Activated T-helper 1 cell treated with anti-CD3 and anti-CD28 coated beads, Interleukin-12 subunit alpha, Interleukin-12 subunit beta, Interleukin-2, Interleukin-4 antibody, amounts not matched to agents 30 ng/mL and 10 ng/mL and 1 ng/mL, durations not matched to agents 14 hours and 24 hours and 36 hours (primary cell): ENCODE measurements at regions of chr19 and their contacts with region 1.

Region 1: GRCh38 chr19:49468746-49469447 is 5.1 kb upstream of the FLT3LG start:
- DNase-seq: peak; percentile 92
- H3K4me3 Mint-ChIP-seq: peak overlapping the region; percentile 82
- H3K27ac Mint-ChIP-seq: peak overlapping the region; percentile 99
- H3K4me1 Mint-ChIP-seq: peaks cover 32% of the 10 kb centered on the region
- H3K27me3 Mint-ChIP-seq: no peaks in the 10 kb centered on the region

Region 2: GRCh38 chr19:49333811-49334288 is 135.0 kb before region 1 on chr19:
- intact Hi-C with region 1: loop called (anchors 2 kb)
- DNase-seq: peak; percentile 70
- H3K4me3 Mint-ChIP-seq: peak overlapping the region; percentile 85
- H3K27ac Mint-ChIP-seq: peak overlapping the region; percentile 95
- H3K4me1 Mint-ChIP-seq: peaks cover 74% of the 10 kb centered on the region
- H3K27me3 Mint-ChIP-seq: no peaks in the 10 kb centered on the region

Region 3: DNA sequence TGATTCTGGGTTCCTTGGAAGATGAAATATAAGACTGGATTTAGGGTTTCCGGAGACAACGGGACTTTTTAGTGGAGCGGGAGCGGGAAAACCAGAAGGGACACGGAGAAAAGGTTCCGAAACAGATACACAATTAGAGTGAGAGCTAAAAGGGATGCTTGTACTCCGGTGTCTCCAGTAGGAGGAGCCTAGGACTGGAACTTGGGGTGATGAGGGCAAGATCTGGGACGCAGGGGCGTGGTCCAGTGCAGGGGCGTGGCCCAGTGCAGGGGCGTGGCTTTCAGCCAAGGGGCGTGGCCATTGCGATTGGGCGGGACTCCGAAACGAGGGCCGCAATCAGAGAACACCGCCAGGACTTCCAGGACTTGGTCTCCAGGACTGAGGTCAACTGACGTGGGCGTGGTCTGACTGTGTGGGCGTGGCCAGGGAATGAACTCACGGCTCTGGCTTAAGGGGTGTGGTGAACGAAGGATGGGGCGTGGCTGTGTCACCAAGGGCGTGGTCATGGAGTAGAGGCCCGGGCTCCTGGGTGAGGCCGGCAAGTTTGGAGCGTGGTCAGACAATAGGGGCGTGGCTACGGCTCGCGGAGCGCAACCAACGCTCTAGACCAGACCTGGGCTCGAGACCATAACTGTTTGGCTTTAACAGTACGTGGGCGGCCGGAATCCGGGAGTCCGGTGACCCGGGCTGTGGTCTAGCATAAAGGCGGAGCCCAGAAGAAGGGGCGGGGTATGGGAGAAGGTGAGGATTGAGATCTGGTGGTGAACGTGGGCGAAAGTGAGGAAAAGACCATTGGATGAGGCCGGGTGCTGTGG is 105.4 kb before region 1 on chr19 and contains the start of gene DKKL1:
- intact Hi-C with region 1: loop called (anchors 1 kb)
- DNase-seq: peak; percentile 72
- H3K4me3 Mint-ChIP-seq: no peak within 1 kb of the TSS
- H3K27ac Mint-ChIP-seq: no peak within 1 kb of the TSS
- H3K4me1 Mint-ChIP-seq: peaks cover 6% of the 10 kb centered on the region
- H3K27me3 Mint-ChIP-seq: peaks cover 32% of the 10 kb centered on the region
- total RNA-seq, gene DKKL1: not detected in 2 replicates

Region 4: GRCh38 chr19:49391581-49392399 is 77.1 kb before region 1 on chr19:
- intact Hi-C with region 1: loop called (anchors 1 kb)
- DNase-seq: peak; percentile 71
- H3K4me3 Mint-ChIP-seq: no peak overlapping the region
- H3K27ac Mint-ChIP-seq: peak overlapping the region; percentile 5
- H3K4me1 Mint-ChIP-seq: peaks cover 12% of the 10 kb centered on the region
- H3K27me3 Mint-ChIP-seq: peaks cover 3% of the 10 kb centered on the region

Region 5: GRCh38 chr19:49451430-49452181 is 17.3 kb before region 1 on chr19 and contains the start of gene PIH1D1:
- intact Hi-C with region 1: loop called (anchors 1 kb)
- DNase-seq: peak; percentile 94
- H3K4me3 Mint-ChIP-seq: peak within 1 kb of the TSS; percentile 96
- H3K27ac Mint-ChIP-seq: peak within 1 kb of the TSS; percentile 99
- H3K4me1 Mint-ChIP-seq: peaks cover 55% of the 10 kb centered on the region
- H3K27me3 Mint-ChIP-seq: no peaks in the 10 kb centered on the region
- total RNA-seq, gene PIH1D1: 124 and 126 TPM in 2 replicates

Region 6: GRCh38 chr19:49487277-49488045 is 18.6 kb after region 1 on chr19 and contains the start of gene RPL13A:
- intact Hi-C with region 1: loop called (anchors 1 kb)
- DNase-seq: peak; percentile 100
- H3K4me3 Mint-ChIP-seq: peak within 1 kb of the TSS; percentile 98
- H3K27ac Mint-ChIP-seq: peak within 1 kb of the TSS; percentile 94
- H3K4me1 Mint-ChIP-seq: peaks cover 27% of the 10 kb centered on the region
- H3K27me3 Mint-ChIP-seq: peaks cover 4% of the 10 kb centered on the region
- total RNA-seq, gene RPL13A: 2,876 and 2,988 TPM in 2 replicates

Region 7: GRCh38 chr19:49497047-49497788 is 28.3 kb after region 1 on chr19:
- intact Hi-C with region 1: loop called (anchors 1 kb)
- DNase-seq: peak; percentile 65
- H3K4me3 Mint-ChIP-seq: peak overlapping the region; percentile 91
- H3K27ac Mint-ChIP-seq: peak overlapping the region; percentile 94
- H3K4me1 Mint-ChIP-seq: peaks cover 64% of the 10 kb centered on the region
- H3K27me3 Mint-ChIP-seq: no peaks in the 10 kb centered on the region